Endothelial cell of umbilical vein (primary cell): ENCODE measurements at regions of chr1 and their contacts with region 1.

Region 1: GRCh38 chr1:70410604-70411359 is at the start of gene CTH:
- DNase-seq: peak; percentile 98
- H3K4me3 ChIP-seq: peak within 1 kb of the TSS; percentile 59 to 92 (median 70)
- H3K27ac ChIP-seq: peak within 1 kb of the TSS; percentile 91
- H3K4me1 ChIP-seq: peaks cover 4% of the 10 kb centered on the region
- H3K27me3 ChIP-seq: no peaks in the 10 kb centered on the region
- CTCF ChIP-seq: no peak
- POLR2A ChIP-seq: peak; percentile 79
- total RNA-seq, gene CTH: 2.6 and 3.2 TPM in 2 replicates

Region 2: GRCh38 chr1:70017770-70018169 is 393.0 kb before region 1 on chr1:
- CTCF ChIA-PET with region 1: no interaction called
- POLR2A ChIA-PET with region 1: no interaction called
- dilution Hi-C with region 1: no loop called
- intact Hi-C with region 1: no loop called
- DNase-seq: no peak
- H3K4me3 ChIP-seq: no peak overlapping the region
- H3K27ac ChIP-seq: no peak overlapping the region
- H3K4me1 ChIP-seq: no peaks in the 10 kb centered on the region
- H3K27me3 ChIP-seq: no peaks in the 10 kb centered on the region
- CTCF ChIP-seq: no peak
- POLR2A ChIP-seq: no peak

Region 3: GRCh38 chr1:70048336-70049094 is 362.3 kb before region 1 on chr1:
- CTCF ChIA-PET with region 1: no interaction called
- POLR2A ChIA-PET with region 1: no interaction called
- dilution Hi-C with region 1: no loop called
- intact Hi-C with region 1: no loop called
- DNase-seq: no peak
- H3K4me3 ChIP-seq: no peak overlapping the region
- H3K27ac ChIP-seq: no peak overlapping the region
- H3K4me1 ChIP-seq: peaks cover 19% of the 10 kb centered on the region
- H3K27me3 ChIP-seq: no peaks in the 10 kb centered on the region
- CTCF ChIP-seq: no peak
- POLR2A ChIP-seq: no peak

Region 4: GRCh38 chr1:70134148-70134547 is 276.6 kb before region 1 on chr1:
- CTCF ChIA-PET with region 1: no interaction called
- POLR2A ChIA-PET with region 1: no interaction called
- dilution Hi-C with region 1: no loop called
- intact Hi-C with region 1: loop called (anchors 5 kb)
- DNase-seq: no peak
- H3K4me3 ChIP-seq: no peak overlapping the region
- H3K27ac ChIP-seq: no peak overlapping the region
- H3K4me1 ChIP-seq: no peaks in the 10 kb centered on the region
- H3K27me3 ChIP-seq: no peaks in the 10 kb centered on the region
- CTCF ChIP-seq: no peak
- POLR2A ChIP-seq: no peak

Region 5: DNA sequence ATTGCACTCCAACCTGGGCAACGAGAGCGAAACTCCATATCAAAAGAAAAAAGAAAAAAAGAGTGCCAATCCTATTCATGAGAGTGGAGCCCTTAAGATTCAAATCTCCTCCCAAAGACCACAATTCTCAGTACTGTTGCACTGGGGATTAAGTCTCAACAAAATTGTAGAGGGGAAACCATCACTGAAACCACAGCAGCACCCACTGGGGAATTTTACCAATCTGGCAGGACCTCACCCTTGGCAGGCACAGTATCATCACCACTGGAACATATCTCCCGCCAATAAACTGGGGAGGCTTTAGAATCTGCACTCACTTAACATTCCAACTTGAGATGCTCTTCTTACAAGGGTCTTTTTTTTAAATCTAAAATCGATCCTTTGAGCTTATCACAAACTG is 246.4 kb before region 1 on chr1:
- CTCF ChIA-PET with region 1: no interaction called
- POLR2A ChIA-PET with region 1: no interaction called
- dilution Hi-C with region 1: no loop called
- intact Hi-C with region 1: no loop called
- DNase-seq: no peak
- H3K4me3 ChIP-seq: no peak overlapping the region
- H3K27ac ChIP-seq: no peak overlapping the region
- H3K4me1 ChIP-seq: no peaks in the 10 kb centered on the region
- H3K27me3 ChIP-seq: no peaks in the 10 kb centered on the region
- CTCF ChIP-seq: no peak
- POLR2A ChIP-seq: no peak

Region 6: DNA sequence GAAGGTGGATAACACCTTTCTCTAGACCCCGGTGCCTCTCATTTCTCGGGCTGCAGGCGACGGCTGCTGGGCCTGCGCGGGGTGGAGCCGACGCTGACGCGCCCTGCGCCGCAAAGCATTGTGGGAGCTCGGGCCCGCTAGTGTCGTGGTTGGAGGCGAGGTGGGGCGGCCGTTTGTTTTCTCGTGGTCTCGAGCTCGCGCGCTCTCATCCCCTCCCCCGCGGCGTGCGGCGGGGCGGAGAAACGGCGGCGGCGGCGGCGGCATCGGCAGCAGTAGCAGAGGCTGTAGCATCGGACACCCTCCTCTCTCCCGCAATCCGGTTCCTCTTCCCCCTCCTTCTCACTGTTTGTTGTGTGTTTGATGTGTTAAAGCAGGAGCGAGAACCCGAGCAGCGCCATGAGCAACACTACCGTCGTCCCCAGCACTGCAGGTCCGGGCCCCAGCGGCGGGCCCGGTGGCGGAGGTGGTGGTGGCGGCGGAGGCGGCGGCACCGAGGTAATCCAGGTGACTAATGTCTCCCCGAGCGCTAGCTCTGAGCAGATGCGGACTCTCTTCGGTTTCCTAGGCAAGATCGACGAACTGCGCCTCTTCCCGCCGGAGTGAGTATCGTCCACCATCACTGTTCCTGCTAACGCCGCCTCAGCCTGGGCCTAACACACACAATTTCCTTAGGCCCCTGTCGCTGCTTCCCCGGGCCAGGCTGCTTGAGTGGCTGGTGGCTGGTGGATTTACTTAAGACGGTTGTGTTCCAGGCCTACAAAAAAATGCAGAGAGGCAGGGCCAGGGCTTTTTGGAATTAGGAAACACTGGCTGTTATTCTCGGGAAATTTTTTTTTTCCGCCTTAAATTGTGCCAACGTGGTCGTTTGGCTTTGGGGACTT is 189.3 kb before region 1 on chr1 and contains the start of gene SRSF11:
- CTCF ChIA-PET with region 1: no interaction called
- POLR2A ChIA-PET with region 1: no interaction called
- dilution Hi-C with region 1: no loop called
- intact Hi-C with region 1: loop called (anchors 2 kb)
- DNase-seq: peak; percentile 95
- H3K4me3 ChIP-seq: peak within 1 kb of the TSS; percentile 55 to 94 (median 92)
- H3K27ac ChIP-seq: peak within 1 kb of the TSS; percentile 84
- H3K4me1 ChIP-seq: peaks cover 25% of the 10 kb centered on the region
- H3K27me3 ChIP-seq: no peaks in the 10 kb centered on the region
- CTCF ChIP-seq: no peak
- POLR2A ChIP-seq: peak; percentile 73
- total RNA-seq, gene SRSF11: 168 and 177 TPM in 2 replicates

Region 7: DNA sequence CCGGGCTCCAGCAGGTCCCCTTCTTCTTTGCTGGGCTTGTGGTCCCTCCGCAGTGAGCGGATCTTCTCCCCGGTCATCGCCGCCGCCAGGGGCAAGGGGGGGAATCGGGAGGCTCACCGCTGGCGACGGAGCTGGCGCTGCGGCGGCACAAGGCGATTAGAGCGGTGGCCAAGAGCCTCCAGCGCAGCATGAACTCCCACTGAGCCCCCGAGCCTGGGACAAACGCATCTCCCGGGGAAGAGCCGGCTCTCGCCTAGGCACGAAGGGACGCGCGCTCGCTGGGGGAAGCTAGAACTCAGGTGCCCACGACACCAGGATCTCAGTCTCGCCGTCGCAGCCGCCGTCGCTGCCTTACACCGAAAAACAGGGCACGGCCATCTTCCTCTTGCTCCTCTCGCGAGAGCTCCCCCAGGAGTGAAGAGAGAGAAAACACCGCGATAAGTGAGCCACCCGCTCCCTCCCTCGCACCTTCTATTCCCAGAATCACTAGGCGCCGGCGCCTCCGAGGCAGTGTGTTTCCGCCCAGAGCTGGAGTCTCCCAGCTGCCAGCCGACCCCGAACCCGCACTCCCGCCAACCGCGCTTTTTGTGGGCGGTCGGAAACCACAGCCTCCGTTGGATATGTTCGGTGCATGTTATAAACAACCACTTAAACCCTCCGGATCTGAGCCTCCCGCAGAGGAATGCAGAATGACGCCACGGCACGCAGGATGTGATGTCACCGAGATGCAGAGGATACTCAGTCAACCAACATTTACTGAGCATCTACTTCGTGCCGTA is 56.3 kb before region 1 on chr1 and contains the start of gene ANKRD13C:
- CTCF ChIA-PET with region 1: interaction called, 11 read pairs
- POLR2A ChIA-PET with region 1: interaction called, 13 read pairs
- dilution Hi-C with region 1: no loop called
- intact Hi-C with region 1: loop called (anchors 1 kb)
- DNase-seq: peak; percentile 97
- H3K4me3 ChIP-seq: peak within 1 kb of the TSS; percentile 61 to 83 (median 83)
- H3K27ac ChIP-seq: peak within 1 kb of the TSS; percentile 83
- H3K4me1 ChIP-seq: peaks cover 11% of the 10 kb centered on the region
- H3K27me3 ChIP-seq: no peaks in the 10 kb centered on the region
- CTCF ChIP-seq: peak in 1 of 2 donors; percentile 16
- POLR2A ChIP-seq: peak; percentile 84
- total RNA-seq, gene ANKRD13C: 17.3 and 17.6 TPM in 2 replicates

Region 8: DNA sequence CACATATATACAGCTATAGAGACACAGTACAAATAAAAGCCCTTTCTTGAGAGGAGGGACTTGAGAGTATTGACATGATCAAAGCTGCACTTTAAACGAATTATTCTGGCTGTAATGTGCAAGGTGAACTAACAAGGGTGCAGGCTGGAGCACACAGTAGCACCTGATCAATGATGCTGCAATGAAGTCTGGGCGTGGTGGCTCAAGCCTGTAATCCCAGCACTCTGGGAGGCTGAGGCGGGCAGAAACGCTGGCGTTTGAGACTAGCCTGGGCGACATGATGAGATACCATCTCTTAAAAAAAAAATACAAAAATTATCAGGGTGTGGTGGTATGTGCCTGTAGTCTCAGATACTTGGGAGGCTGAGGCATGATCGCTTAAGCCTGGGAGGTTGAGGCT is 13.8 kb before region 1 on chr1:
- CTCF ChIA-PET with region 1: no interaction called
- POLR2A ChIA-PET with region 1: no interaction called
- dilution Hi-C with region 1: no loop called
- intact Hi-C with region 1: no loop called
- DNase-seq: no peak
- H3K4me3 ChIP-seq: no peak overlapping the region
- H3K27ac ChIP-seq: no peak overlapping the region
- H3K4me1 ChIP-seq: no peaks in the 10 kb centered on the region
- H3K27me3 ChIP-seq: no peaks in the 10 kb centered on the region
- CTCF ChIP-seq: no peak
- POLR2A ChIP-seq: no peak

Region 9: DNA sequence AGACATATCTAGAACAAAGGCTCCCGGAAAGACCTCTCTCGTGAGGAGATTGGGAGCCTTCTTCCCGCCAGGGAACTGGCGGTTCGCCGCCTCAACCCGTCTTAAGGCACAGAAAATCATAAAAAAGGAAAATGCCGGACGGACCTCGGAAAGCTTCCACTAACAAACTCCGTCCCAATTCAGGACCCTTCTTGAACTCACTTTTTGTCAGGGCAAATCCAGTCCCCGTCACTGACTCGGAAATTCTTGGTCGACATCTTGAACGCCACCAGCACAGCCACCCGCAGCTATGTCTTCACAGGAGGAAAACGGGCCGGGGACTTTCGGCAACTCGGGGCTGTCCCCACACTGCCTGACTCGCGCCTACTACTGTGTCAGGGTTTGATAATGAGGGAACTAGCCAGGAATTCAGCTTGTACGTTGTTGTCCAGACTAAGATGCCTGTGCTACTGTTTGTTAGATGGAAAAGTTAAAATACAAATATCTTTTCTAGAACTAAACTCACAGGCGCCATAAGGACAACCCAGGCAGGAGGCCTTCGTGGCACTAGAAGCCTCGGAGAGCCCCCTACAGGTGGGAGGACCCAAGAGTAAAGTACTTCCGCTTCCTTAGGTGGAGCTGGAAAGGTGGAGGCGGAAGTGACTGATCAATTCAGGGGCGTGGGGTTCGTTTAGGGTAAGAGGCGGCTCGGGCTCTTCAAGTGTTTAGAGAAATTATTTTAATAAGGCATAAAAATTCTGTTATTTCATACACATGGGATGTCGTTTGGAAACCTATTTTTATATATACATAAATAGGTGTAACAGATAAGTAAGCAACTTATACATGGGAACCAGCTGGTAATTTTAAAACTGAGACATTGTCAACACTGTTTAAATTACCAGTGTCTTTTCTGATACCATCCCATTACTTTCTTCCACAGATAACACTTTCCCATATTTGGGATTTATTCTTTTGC is 670.2 kb after region 1 on chr1 and contains the start of gene ZRANB2:
- CTCF ChIA-PET with region 1: no interaction called
- POLR2A ChIA-PET with region 1: no interaction called
- dilution Hi-C with region 1: no loop called
- intact Hi-C with region 1: loop called (anchors 1 kb)
- DNase-seq: peak; percentile 94
- H3K4me3 ChIP-seq: peak within 1 kb of the TSS; percentile 59 to 100 (median 95)
- H3K27ac ChIP-seq: peak within 1 kb of the TSS; percentile 96
- H3K4me1 ChIP-seq: peaks cover 18% of the 10 kb centered on the region
- H3K27me3 ChIP-seq: no peaks in the 10 kb centered on the region
- CTCF ChIP-seq: peak; percentile 73 to 78
- POLR2A ChIP-seq: peak; percentile 88
- total RNA-seq, gene ZRANB2: 77.9 and 84.1 TPM in 2 replicates